HCT116 (cell line): ENCODE measurements at regions of chr7 and their contacts with region 1.

Region 1: DNA sequence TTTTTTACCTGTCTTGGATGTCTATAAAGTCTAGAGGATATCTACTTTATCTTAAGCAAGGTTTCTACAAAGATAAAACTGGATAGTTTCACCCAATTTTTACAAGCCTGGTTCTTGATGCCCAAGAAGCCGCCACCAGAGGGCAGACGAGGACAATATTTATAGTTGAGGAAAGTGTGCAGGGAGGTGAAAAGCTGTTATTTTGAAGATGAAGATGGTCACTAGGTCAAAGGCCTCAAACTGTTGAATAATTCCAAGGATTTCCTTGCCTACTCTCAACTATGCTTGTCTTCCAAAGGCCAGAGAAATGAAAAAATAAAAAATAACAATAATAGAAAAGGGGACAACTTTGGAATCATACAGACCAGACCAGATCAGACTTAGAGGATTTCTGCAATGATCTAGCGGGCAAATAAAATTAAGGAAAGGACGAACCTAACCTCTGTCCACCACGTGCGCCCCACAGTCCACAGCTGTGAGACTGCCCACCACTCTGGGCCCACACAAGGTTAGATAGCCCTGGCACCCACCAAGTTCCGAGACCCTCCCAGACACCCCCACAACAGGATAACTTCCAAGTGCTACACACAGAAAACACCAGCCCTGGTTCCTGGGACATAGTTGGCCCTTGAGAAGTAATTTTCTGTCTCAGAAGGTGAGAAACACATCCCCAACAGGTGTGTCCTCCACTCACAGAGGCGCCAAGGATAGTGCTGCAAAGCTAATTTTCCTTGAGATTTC is 2.8 kb downstream of the PKD1L1 start:
- DNase-seq: peak; percentile 51
- ATAC-seq: peak; percentile 84
- H3K4me3 ChIP-seq: no peak overlapping the region
- H3K27ac ChIP-seq: no peak overlapping the region
- H3K4me1 ChIP-seq: peaks cover 0 to 9% of the 10 kb centered on the region in 2 experiments; a peak in 2 of 4 replicates
- H3K27me3 ChIP-seq: no peaks in the 10 kb centered on the region
- CTCF ChIP-seq: peak; percentile 66 to 87 (median 75); a peak in 5 of 6 replicates
- POLR2A ChIP-seq: no peak
- RAD21 ChIP-seq: peak; percentile 88

Region 2: GRCh38 chr7:47552621-47553020 is 392.8 kb before region 1 on chr7:
- CTCF ChIA-PET with region 1: no interaction called
- POLR2A ChIA-PET with region 1: no interaction called
- RAD21 ChIA-PET with region 1: no interaction called
- intact Hi-C with region 1: no loop called
- DNase-seq: no peak
- ATAC-seq: no peak
- H3K4me3 ChIP-seq: no peak overlapping the region
- H3K27ac ChIP-seq: no peak overlapping the region
- H3K4me1 ChIP-seq: peaks cover 27 to 33% of the 10 kb centered on the region in 2 experiments
- H3K27me3 ChIP-seq: no peaks in the 10 kb centered on the region
- CTCF ChIP-seq: no peak
- POLR2A ChIP-seq: no peak
- RAD21 ChIP-seq: no peak

Region 3: DNA sequence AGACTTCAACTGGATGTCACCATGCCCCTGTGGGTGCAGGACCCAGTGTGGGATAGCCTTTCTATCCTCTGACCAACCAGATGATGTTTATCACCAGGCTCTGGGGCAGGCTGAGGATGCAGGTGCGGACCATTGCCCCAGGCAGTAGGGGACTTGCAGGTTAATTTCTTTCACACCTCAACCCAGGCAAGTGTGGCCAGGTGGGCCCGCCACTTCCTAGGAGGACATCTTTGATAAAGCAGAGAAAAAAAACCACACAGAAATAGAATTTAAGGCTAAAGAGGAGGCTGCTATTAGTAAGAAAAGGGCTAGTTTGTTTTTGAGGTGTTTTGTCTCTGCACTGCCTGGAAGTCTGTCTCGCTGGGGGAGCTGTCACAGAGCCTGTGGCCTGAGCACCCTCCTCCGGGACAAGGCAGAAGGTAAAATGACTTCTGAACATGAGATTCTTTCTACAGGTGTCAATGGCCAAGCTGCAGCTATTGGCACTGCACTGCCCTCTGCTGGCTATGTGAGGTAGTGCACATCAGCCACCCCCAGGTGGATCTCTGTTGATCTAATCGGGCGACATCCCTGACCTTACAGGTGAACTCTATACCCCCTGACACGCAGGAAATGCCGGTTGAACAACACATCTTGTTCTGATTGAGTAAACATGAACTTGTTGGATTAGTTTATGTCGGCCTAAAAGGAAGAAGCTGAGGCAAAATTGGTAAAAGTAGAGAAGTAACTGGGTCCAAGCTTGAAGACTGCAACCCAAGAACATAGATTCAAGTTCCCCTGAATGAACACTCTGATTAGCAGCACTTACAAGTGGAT is 164.6 kb after region 1 on chr7:
- CTCF ChIA-PET with region 1: interaction called, 31 read pairs
- POLR2A ChIA-PET with region 1: interaction called, 3 read pairs
- RAD21 ChIA-PET with region 1: interaction called, 7 read pairs
- intact Hi-C with region 1: loop called (anchors 1 kb)
- DNase-seq: peak; percentile 46
- ATAC-seq: peak; percentile 92
- H3K4me3 ChIP-seq: no peak overlapping the region
- H3K27ac ChIP-seq: no peak overlapping the region
- H3K4me1 ChIP-seq: no peaks in the 10 kb centered on the region
- H3K27me3 ChIP-seq: no peaks in the 10 kb centered on the region
- CTCF ChIP-seq: peak; percentile 89 to 99 (median 96)
- POLR2A ChIP-seq: no peak
- RAD21 ChIP-seq: peak; percentile 96

Region 4: DNA sequence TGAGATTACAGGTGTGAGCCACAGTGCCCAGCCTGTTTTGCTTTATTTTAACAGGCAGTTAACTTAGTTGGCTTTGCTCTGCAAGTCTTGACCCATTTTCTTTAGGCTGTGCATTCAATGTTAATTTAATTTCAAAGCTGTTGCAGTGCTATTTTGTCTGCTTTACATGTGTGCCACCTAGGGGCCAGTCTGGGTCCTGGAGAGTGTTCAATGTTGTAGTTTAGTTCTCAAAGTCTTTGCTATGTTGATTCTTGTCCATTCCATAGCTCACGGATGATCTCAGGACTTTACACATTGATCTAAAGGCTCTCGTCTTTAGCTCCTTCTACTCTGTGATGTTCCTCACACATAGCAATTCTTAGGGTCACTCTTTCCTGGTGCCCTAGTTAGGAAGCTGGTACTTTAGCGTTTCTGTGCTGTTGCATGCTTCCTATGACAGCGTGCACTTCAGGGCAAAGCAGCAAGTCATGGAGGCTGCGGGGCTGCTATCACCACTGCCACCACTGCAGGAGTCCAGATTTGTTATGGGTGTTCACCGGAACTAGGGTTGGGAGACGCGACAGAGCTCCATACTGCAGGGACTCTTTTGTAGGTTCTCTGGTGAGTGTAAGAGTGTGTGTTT is 209.5 kb after region 1 on chr7:
- CTCF ChIA-PET with region 1: interaction called, 34 read pairs
- POLR2A ChIA-PET with region 1: no interaction called
- RAD21 ChIA-PET with region 1: interaction called, 12 to 14 read pairs
- intact Hi-C with region 1: loop called (anchors 1 kb)
- DNase-seq: peak; percentile 28
- ATAC-seq: peak; percentile 95
- H3K4me3 ChIP-seq: no peak overlapping the region
- H3K27ac ChIP-seq: no peak overlapping the region
- H3K4me1 ChIP-seq: no peaks in the 10 kb centered on the region
- H3K27me3 ChIP-seq: peaks cover 15% of the 10 kb centered on the region
- CTCF ChIP-seq: peak; percentile 69 to 75 (median 73); a peak in 5 of 6 replicates
- POLR2A ChIP-seq: no peak
- RAD21 ChIP-seq: peak; percentile 84

Region 5: DNA sequence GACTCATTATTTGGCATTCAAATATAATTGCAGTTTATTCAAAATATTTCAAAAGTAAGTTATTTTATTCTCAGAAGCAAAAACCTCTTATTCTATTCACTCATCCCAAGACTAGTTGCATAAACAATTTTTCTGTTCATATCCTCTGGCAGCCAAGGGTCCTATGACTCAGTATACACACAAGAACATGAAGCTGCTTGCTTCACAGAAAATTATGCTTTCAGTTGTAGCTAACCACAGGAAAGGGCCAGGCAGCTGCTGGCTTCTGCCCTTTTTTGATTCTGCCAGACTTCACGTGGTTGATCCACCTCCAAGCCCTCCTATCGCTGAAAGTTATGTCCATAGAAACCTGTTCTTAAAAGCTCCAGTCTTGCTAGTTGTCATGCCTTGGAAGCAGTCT is 334.7 kb after region 1 on chr7:
- CTCF ChIA-PET with region 1: no interaction called
- POLR2A ChIA-PET with region 1: no interaction called
- RAD21 ChIA-PET with region 1: no interaction called
- intact Hi-C with region 1: no loop called
- DNase-seq: no peak
- ATAC-seq: no peak
- H3K4me3 ChIP-seq: no peak overlapping the region
- H3K27ac ChIP-seq: no peak overlapping the region
- H3K4me1 ChIP-seq: no peaks in the 10 kb centered on the region
- H3K27me3 ChIP-seq: peaks cover 11% of the 10 kb centered on the region
- CTCF ChIP-seq: no peak
- POLR2A ChIP-seq: no peak
- RAD21 ChIP-seq: no peak

Region 6: DNA sequence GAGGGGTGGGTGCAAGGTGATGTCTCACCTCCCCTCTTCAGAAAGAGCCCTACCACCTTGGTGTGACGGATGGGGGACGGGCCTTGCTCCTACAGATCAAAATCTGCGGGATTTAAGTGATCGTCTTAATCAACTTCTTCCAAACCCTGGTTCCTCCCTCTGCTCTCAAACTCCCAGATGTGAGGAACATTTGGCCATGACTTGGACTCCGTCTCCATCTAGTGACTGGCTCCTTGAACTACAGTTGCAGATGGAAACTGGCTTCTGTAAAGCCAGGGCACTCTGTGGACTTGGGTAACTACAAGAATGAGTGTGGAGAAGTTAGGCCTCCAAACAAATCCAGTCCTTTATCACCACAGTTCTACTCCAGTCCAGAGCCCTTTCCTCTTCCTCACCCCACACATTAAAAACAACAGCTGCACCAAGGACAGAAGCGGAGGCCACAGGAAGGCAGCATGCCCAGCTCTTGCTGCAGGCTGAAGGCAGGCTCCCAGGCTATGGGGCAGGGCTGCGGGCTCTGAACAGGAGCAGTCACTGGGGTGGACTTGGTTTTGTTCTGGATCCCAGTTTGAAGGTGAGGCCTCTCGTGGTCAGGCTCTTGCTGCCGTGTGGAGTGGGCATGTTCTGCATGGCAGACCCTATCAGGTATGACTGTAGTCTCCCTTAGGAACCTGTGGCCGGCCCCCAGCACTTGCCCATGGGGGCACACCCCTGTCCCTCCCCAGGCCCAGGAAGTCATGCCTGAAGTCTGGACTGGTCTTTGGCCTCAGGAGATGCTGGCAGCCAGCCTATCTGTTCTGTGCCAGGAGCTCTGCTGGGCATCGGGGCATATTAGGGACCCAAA is 1907.4 kb after region 1 on chr7:
- CTCF ChIA-PET with region 1: no interaction called
- POLR2A ChIA-PET with region 1: no interaction called
- RAD21 ChIA-PET with region 1: no interaction called
- intact Hi-C with region 1: loop called (anchors 10 kb)
- DNase-seq: peak; percentile 13
- ATAC-seq: peak; percentile 71; the same call in 1 of the 2 replicates
- H3K4me3 ChIP-seq: no peak overlapping the region
- H3K27ac ChIP-seq: no peak overlapping the region
- H3K4me1 ChIP-seq: no peaks in the 10 kb centered on the region
- H3K27me3 ChIP-seq: no peaks in the 10 kb centered on the region
- CTCF ChIP-seq: peak; percentile 14 to 60 (median 59); a peak in 4 of 6 replicates
- POLR2A ChIP-seq: no peak
- RAD21 ChIP-seq: peak; percentile 61